Endothelial cell of umbilical vein (primary cell): ENCODE measurements at regions of chr10 and their contacts with region 1.

Region 1: GRCh38 chr10:113563306-113564088 is 10.6 kb downstream of the HABP2 start:
- DNase-seq: peak; percentile 68
- H3K4me3 ChIP-seq: peak overlapping the region in 2 of 3 experiments; percentile 41
- H3K27ac ChIP-seq: no peak overlapping the region
- H3K4me1 ChIP-seq: peaks cover 8% of the 10 kb centered on the region
- H3K27me3 ChIP-seq: no peaks in the 10 kb centered on the region
- CTCF ChIP-seq: peak; percentile 97 to 99
- POLR2A ChIP-seq: no peak

Region 2: DNA sequence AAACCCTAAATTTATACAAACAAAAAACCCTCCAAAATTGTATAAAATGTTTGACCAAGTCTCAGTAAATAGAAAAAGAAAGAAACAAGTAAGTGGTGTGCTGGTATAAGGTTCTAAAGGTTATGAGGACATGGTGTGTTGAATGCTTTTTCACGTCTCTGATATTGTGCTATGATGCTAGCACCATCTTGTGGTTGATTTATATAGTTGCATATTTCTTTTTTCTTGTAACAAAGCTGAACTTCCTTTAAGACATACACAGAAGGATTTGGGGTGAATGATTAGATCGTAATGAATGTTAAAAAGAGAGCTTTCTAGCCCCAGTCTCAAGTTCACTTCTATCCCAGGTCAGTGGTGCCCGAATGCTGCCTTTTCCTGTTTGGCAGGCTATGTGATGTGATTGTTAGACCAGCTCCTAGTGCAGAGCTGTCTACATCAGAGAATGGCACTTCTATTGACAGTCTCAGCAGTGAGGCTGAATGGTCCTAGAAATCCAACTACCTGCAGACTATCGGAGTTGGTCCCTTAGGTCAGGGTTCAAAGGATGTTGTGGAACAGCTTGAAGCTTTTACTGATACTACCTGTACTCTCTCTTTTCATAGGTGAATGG is 1091.5 kb before region 1 on chr10:
- CTCF ChIA-PET with region 1: interaction called, 10 read pairs
- POLR2A ChIA-PET with region 1: no interaction called
- dilution Hi-C with region 1: no loop called
- intact Hi-C with region 1: loop called (anchors 1 kb)
- DNase-seq: peak; percentile 66
- H3K4me3 ChIP-seq: no peak overlapping the region
- H3K27ac ChIP-seq: no peak overlapping the region
- H3K4me1 ChIP-seq: no peaks in the 10 kb centered on the region
- H3K27me3 ChIP-seq: no peaks in the 10 kb centered on the region
- CTCF ChIP-seq: peak; percentile 44 to 45
- POLR2A ChIP-seq: no peak

Region 3: GRCh38 chr10:112689299-112690072 is 874.0 kb before region 1 on chr10:
- CTCF ChIA-PET with region 1: no interaction called
- POLR2A ChIA-PET with region 1: no interaction called
- dilution Hi-C with region 1: no loop called
- intact Hi-C with region 1: loop called (anchors 10 kb)
- DNase-seq: peak; percentile 11
- H3K4me3 ChIP-seq: no peak overlapping the region
- H3K27ac ChIP-seq: no peak overlapping the region
- H3K4me1 ChIP-seq: no peaks in the 10 kb centered on the region
- H3K27me3 ChIP-seq: no peaks in the 10 kb centered on the region
- CTCF ChIP-seq: peak in 1 of 2 donors; percentile 23
- POLR2A ChIP-seq: no peak

Region 4: GRCh38 chr10:113441220-113441619 is 122.3 kb before region 1 on chr10:
- CTCF ChIA-PET with region 1: interaction called, 21 read pairs
- POLR2A ChIA-PET with region 1: no interaction called
- dilution Hi-C with region 1: no loop called
- intact Hi-C with region 1: no loop called
- DNase-seq: no peak
- H3K4me3 ChIP-seq: no peak overlapping the region
- H3K27ac ChIP-seq: no peak overlapping the region
- H3K4me1 ChIP-seq: no peaks in the 10 kb centered on the region
- H3K27me3 ChIP-seq: no peaks in the 10 kb centered on the region
- CTCF ChIP-seq: peak in 1 of 2 donors; percentile 2
- POLR2A ChIP-seq: no peak

Region 5: GRCh38 chr10:113521123-113521795 is 42.2 kb before region 1 on chr10:
- CTCF ChIA-PET with region 1: interaction called, 38 read pairs
- POLR2A ChIA-PET with region 1: no interaction called
- dilution Hi-C with region 1: no loop called
- intact Hi-C with region 1: loop called (anchors 1 kb)
- DNase-seq: peak; percentile 73
- H3K4me3 ChIP-seq: no peak overlapping the region
- H3K27ac ChIP-seq: no peak overlapping the region
- H3K4me1 ChIP-seq: no peaks in the 10 kb centered on the region
- H3K27me3 ChIP-seq: peaks cover 0 to 1% of the 10 kb centered on the region in 2 experiments
- CTCF ChIP-seq: peak; percentile 92 to 95
- POLR2A ChIP-seq: no peak

Region 6: GRCh38 chr10:113550365-113550764 is 13.1 kb before region 1 on chr10:
- CTCF ChIA-PET with region 1: interaction called, 20 read pairs
- POLR2A ChIA-PET with region 1: no interaction called
- dilution Hi-C with region 1: no loop called
- intact Hi-C with region 1: no loop called
- DNase-seq: peak; percentile 86
- H3K4me3 ChIP-seq: no peak overlapping the region
- H3K27ac ChIP-seq: peak overlapping the region; percentile 73
- H3K4me1 ChIP-seq: peaks cover 31% of the 10 kb centered on the region
- H3K27me3 ChIP-seq: no peaks in the 10 kb centered on the region
- CTCF ChIP-seq: no peak
- POLR2A ChIP-seq: no peak